Esophagus squamous epithelium (tissue), 5 donors: ENCODE measurements at regions of chr11 and their contacts with region 1.

Region 1: GRCh38 chr11:122209619-122210366 is 93.8 kb upstream of the BLID start:
- DNase-seq: no peak
- H3K4me3 ChIP-seq: no peak overlapping the region
- H3K27ac ChIP-seq: peak overlapping the region in 3 of 4 donors; percentile 11 to 57 (median 52)
- H3K4me1 ChIP-seq: peaks cover 0 to 49% (median 26%) of the 10 kb centered on the region in 3 donors
- H3K27me3 ChIP-seq: no peaks in the 10 kb centered on the region
- CTCF ChIP-seq: no peak
- POLR2A ChIP-seq: no peak

Region 2: GRCh38 chr11:121716060-121716459 is 493.7 kb before region 1 on chr11:
- intact Hi-C with region 1: no loop called
- DNase-seq: no peak
- H3K4me3 ChIP-seq: no peak overlapping the region
- H3K27ac ChIP-seq: peak overlapping the region in 1 of 4 donors; percentile 43
- H3K4me1 ChIP-seq: no peaks in the 10 kb centered on the region
- H3K27me3 ChIP-seq: no peaks in the 10 kb centered on the region
- CTCF ChIP-seq: no peak
- POLR2A ChIP-seq: no peak

Region 3: DNA sequence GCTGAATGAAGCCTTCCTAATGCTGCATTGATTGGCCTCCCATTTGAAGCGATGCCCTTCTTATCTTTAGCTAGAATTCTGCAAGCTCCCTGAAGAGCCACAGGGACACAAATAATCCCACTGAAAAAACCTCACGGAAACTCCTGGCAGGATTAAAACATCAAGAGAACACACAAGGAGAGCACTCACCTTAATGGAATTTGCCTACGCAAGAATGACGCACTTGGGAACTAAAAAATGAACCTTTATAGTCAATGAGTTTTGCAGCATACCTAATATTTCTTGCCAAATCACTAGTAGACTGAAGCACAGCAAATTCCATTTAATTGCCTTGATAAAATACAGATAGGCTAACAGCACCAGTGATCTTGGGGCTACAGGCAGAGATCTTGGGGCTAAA is 212.9 kb after region 1 on chr11:
- intact Hi-C with region 1: no loop called
- DNase-seq: no peak
- H3K4me3 ChIP-seq: no peak overlapping the region
- H3K27ac ChIP-seq: no peak overlapping the region
- H3K4me1 ChIP-seq: no peaks in the 10 kb centered on the region
- H3K27me3 ChIP-seq: no peaks in the 10 kb centered on the region
- CTCF ChIP-seq: no peak
- POLR2A ChIP-seq: no peak

Region 4: GRCh38 chr11:122505304-122506006 is 295.7 kb after region 1 on chr11:
- intact Hi-C with region 1: loop called (anchors 5 kb)
- DNase-seq: peak; percentile 9
- H3K4me3 ChIP-seq: no peak overlapping the region
- H3K27ac ChIP-seq: peak overlapping the region in 1 of 4 donors; percentile 39
- H3K4me1 ChIP-seq: peaks cover 0 to 5% (median 0%) of the 10 kb centered on the region in 3 donors
- H3K27me3 ChIP-seq: no peaks in the 10 kb centered on the region
- CTCF ChIP-seq: peak; percentile 26 to 85 (median 78)
- POLR2A ChIP-seq: no peak